Activated naive CD4-positive, alpha-beta T cell treated with anti-CD3 and anti-CD28 coated beads for 36 hours (primary cell): ENCODE measurements at regions of chr11 and their contacts with region 1.

Region 1: GRCh38 chr11:72430741-72431570 is 3.4 kb downstream of the CLPB start:
- DNase-seq: peak; percentile 49
- H3K4me3 Mint-ChIP-seq: no peak overlapping the region
- H3K27ac Mint-ChIP-seq: no peak overlapping the region
- H3K4me1 Mint-ChIP-seq: peaks cover 30% of the 10 kb centered on the region
- H3K27me3 Mint-ChIP-seq: no peaks in the 10 kb centered on the region

Region 2: GRCh38 chr11:71913756-71914526 is 517.0 kb before region 1 on chr11:
- CTCF ChIA-PET with region 1: no interaction called
- intact Hi-C with region 1: loop called (anchors 5 kb)
- DNase-seq: no peak
- H3K4me3 Mint-ChIP-seq: no peak overlapping the region
- H3K27ac Mint-ChIP-seq: no peak overlapping the region
- H3K4me1 Mint-ChIP-seq: peaks cover 15% of the 10 kb centered on the region
- H3K27me3 Mint-ChIP-seq: no peaks in the 10 kb centered on the region

Region 3: GRCh38 chr11:72030472-72031045 is 400.4 kb before region 1 on chr11:
- CTCF ChIA-PET with region 1: interaction called, 4 read pairs
- intact Hi-C with region 1: loop called (anchors 10 kb)
- DNase-seq: no peak
- H3K4me3 Mint-ChIP-seq: no peak overlapping the region
- H3K27ac Mint-ChIP-seq: peak overlapping the region; percentile 13
- H3K4me1 Mint-ChIP-seq: peaks cover 42% of the 10 kb centered on the region
- H3K27me3 Mint-ChIP-seq: no peaks in the 10 kb centered on the region

Region 4: DNA sequence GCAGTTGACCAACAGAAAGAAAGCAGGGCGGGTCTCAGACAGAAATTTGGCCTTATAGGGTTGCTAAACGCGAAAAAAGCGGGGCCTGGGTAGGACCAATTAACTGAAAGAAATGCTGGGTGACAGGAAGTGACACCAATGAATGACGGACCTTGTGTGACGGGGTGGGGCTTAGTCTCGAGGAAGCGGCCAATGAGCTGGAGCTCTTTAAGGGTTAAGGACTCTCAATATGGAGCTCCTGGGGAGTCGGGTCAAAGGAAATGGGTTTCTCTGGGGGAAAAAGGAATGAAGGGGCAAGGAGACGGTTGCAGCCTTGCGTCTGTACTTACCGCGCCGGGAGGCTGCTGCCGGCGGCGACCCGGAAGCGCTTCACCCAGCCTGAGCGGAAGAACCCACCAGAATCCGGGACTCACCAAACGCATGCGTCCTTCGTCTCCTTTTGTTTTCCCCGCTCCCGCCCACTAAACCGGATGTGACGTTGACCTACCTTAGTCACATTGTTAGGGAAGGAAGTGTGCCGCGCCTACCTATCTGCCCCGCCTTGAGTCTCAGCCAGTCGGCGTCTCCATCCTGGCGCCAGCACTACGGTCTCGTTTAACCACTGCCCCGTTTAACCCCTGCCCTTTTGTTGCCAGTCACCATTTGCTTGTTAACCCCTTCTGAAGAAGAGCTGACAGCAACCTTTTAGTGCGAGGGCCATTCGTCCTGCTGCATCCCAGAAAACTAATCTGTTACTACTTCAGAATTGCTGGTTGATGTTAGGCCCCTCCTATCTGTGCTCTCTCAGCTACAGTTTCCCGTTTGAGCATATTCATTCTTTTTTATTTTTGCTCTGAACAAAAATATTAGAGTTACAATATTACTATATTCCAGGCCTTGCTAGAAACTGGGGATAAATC is 318.4 kb before region 1 on chr11 and contains the start of gene ANAPC15:
- CTCF ChIA-PET with region 1: no interaction called
- intact Hi-C with region 1: loop called (anchors 1 kb)
- DNase-seq: peak; percentile 100
- H3K4me3 Mint-ChIP-seq: peak within 1 kb of the TSS; percentile 85
- H3K27ac Mint-ChIP-seq: peak within 1 kb of the TSS; percentile 97
- H3K4me1 Mint-ChIP-seq: peaks cover 12% of the 10 kb centered on the region
- H3K27me3 Mint-ChIP-seq: no peaks in the 10 kb centered on the region
- total RNA-seq, gene ANAPC15: 69.1 to 70.3 TPM

Region 5: DNA sequence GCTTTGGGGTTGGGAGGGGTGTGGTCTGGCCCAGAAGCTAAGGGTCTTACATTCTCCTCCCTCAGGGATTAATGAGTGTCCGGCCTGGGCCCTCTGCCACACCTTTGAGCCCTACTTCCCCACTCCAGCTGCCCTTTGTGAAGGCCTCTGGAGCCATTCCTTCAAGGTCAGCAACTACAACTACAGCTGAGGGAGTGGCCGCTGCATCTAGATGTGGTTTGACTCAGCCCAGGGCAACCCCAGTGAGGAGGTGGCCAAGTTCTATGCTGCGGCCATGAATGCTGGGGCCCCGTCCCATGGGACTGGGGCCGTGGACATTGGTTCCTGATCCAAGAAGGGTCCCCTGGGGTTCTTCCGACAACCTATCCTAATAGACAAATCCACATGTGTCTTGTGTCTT is 253.3 kb before region 1 on chr11:
- CTCF ChIA-PET with region 1: no interaction called
- intact Hi-C with region 1: no loop called
- DNase-seq: no peak
- H3K4me3 Mint-ChIP-seq: no peak overlapping the region
- H3K27ac Mint-ChIP-seq: no peak overlapping the region
- H3K4me1 Mint-ChIP-seq: peaks cover 7% of the 10 kb centered on the region
- H3K27me3 Mint-ChIP-seq: no peaks in the 10 kb centered on the region

Region 6: GRCh38 chr11:72222907-72223614 is 207.9 kb before region 1 on chr11:
- CTCF ChIA-PET with region 1: interaction called, 8 read pairs
- intact Hi-C with region 1: loop called (anchors 1 kb)
- DNase-seq: peak; percentile 96
- H3K4me3 Mint-ChIP-seq: peak overlapping the region; percentile 73
- H3K27ac Mint-ChIP-seq: peak overlapping the region; percentile 75
- H3K4me1 Mint-ChIP-seq: peaks cover 20% of the 10 kb centered on the region
- H3K27me3 Mint-ChIP-seq: peaks cover 3% of the 10 kb centered on the region

Region 7: GRCh38 chr11:72293910-72294615 is 136.9 kb before region 1 on chr11:
- CTCF ChIA-PET with region 1: interaction called, 15 read pairs
- intact Hi-C with region 1: loop called (anchors 5 kb)
- DNase-seq: no peak
- H3K4me3 Mint-ChIP-seq: no peak overlapping the region
- H3K27ac Mint-ChIP-seq: no peak overlapping the region
- H3K4me1 Mint-ChIP-seq: no peaks in the 10 kb centered on the region
- H3K27me3 Mint-ChIP-seq: no peaks in the 10 kb centered on the region

Region 8: DNA sequence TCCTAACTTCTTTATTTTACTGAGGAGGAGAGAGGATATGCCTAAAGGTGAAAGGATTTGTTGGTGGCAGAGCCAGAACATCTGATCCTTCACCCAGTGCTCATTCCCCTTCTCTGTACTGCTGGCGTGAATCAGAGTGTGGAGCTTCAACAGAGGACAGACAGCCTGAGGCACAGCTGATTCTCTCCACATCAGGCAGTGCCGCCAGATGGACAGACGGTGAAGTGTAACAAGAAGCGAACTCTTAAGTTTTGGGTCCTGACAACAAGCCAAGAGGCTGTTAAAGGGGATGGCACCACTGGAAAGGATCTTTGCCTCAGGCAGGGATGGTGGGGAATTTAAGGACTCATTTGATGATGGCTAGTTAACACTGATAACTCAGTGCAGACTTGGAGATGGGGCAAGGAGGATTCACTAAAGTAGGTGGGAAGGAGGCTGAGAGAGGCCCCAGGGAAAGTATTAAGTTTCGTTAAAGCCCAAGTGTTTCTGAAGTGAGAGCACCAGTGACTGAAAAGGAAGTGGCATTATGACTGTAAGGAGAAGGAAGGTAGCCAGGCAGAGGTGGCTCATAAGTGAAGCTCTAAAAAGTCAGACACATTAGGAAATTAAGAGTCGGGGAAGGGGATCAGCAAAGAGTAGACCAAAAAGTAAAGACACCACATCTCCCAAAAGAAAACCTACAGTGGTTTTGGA is 78.0 kb before region 1 on chr11:
- CTCF ChIA-PET with region 1: interaction called, 16 read pairs
- intact Hi-C with region 1: loop called (anchors 5 kb)
- DNase-seq: peak; percentile 45
- H3K4me3 Mint-ChIP-seq: no peak overlapping the region
- H3K27ac Mint-ChIP-seq: no peak overlapping the region
- H3K4me1 Mint-ChIP-seq: no peaks in the 10 kb centered on the region
- H3K27me3 Mint-ChIP-seq: no peaks in the 10 kb centered on the region